Stomach (tissue), 19 donors: ENCODE measurements at regions of chr12 and their contacts with region 1.

Region 1: GRCh38 chr12:116009805-116010204 is 267.7 kb downstream of the MED13L start:
- DNase-seq: no peak
- H3K4me3 ChIP-seq: no peak overlapping the region
- H3K27ac ChIP-seq: no peak overlapping the region
- H3K4me1 ChIP-seq: peaks cover 0 to 5% (median 0%) of the 10 kb centered on the region in 4 donors
- H3K27me3 ChIP-seq: no peaks in the 10 kb centered on the region
- CTCF ChIP-seq: peak in 1 of 7 experiments; percentile 18
- EP300 ChIP-seq: no peak
- POLR2A ChIP-seq: no peak

Region 2: GRCh38 chr12:115960868-115961802 is 48.7 kb before region 1 on chr12:
- intact Hi-C with region 1: no loop called
- DNase-seq: no peak
- H3K4me3 ChIP-seq: no peak overlapping the region
- H3K27ac ChIP-seq: no peak overlapping the region
- H3K4me1 ChIP-seq: no peaks in the 10 kb centered on the region
- H3K27me3 ChIP-seq: no peaks in the 10 kb centered on the region
- CTCF ChIP-seq: no peak
- EP300 ChIP-seq: no peak
- POLR2A ChIP-seq: no peak

Region 3: DNA sequence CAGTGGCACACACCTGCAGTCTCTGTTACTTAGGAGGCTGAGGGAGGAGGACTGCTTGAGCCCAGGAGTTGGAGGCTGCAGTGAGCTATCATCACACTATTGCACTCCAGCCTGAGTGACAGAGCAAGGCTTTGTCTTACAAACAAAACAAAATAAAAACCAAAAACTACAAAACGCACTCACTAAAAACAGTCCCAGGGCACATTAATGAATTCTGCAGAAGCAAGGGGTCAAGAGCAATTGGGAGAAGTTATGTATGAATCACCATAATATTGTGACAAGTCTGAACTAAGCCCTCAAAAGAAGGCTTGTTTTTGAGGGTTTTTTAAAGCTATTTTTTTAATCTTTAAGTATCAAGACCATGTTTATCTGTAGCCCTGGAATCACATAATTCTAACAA is 66.6 kb after region 1 on chr12:
- intact Hi-C with region 1: no loop called
- DNase-seq: no peak
- H3K4me3 ChIP-seq: no peak overlapping the region
- H3K27ac ChIP-seq: no peak overlapping the region
- H3K4me1 ChIP-seq: peaks cover 0 to 52% (median 26%) of the 10 kb centered on the region in 4 donors
- H3K27me3 ChIP-seq: no peaks in the 10 kb centered on the region
- CTCF ChIP-seq: no peak
- EP300 ChIP-seq: no peak
- POLR2A ChIP-seq: no peak

Region 4: DNA sequence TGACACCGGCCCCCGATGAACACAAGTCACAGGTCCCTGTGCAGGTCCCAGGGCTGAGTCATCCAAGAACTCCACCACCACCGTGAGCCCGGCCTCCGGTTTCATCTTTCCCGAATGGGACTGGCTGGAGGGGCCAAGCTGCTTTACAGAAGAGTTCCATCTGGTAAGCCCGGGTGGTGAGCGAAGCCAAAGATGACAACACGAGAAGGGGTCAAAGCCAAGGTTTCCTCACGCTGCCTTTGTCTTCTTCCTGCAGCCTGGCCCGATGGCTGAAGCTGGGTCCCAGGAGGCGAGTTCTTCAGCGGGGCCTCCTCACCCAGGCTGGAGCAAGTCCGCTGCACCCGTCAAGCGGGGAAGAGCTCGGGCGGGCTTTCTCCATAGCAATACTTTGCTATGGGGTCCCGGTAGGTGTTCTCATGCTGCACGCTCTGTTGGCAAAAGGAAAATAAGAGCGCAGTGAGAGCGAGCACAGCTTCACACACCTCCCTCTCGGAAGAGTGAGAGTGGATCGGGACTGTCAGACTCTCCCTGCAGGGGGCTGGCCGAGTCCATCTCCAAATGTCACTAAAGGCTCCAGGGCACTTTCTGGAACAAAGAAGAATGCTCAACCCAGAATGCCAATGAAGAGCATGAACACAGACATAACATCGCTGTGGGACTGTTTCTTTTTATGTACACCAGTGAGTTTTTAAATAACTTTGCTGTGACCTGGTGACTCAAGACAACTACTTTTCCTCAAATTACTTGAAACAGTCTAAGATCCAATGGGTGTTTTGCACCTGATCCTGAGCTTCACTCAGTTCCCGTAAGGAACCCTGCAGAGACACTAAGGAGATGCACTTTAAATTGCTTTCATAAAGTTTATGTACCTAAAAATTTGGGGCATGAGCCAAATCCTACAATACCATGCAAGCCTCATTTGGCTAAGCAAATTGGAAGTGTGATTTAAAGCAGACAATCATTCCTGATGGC is 707.9 kb after region 1 on chr12:
- intact Hi-C with region 1: loop called (anchors 10 kb)
- DNase-seq: peak in 1 of 2 donors; percentile 70
- H3K4me3 ChIP-seq: no peak overlapping the region
- H3K27ac ChIP-seq: peak overlapping the region in 2 of 5 donors; percentile 25 to 40
- H3K4me1 ChIP-seq: peaks cover 5 to 29% (median 22%) of the 10 kb centered on the region in 4 donors
- H3K27me3 ChIP-seq: no peaks in the 10 kb centered on the region
- CTCF ChIP-seq: no peak
- EP300 ChIP-seq: no peak
- POLR2A ChIP-seq: no peak